Activated CD4-positive, alpha-beta T cell treated with anti-CD3 and anti-CD28 coated beads for 36 hours (primary cell): ENCODE measurements at regions of chr10 and their contacts with region 1.

Region 1: GRCh38 chr10:30591249-30591670 is 38.3 kb downstream of the LYZL2 start:
- DNase-seq: peak; percentile 57
- ATAC-seq: peak; percentile 66
- H3K4me3 Mint-ChIP-seq: no peak overlapping the region
- H3K27ac Mint-ChIP-seq: no peak overlapping the region
- H3K4me1 Mint-ChIP-seq: no peaks in the 10 kb centered on the region
- H3K27me3 Mint-ChIP-seq: peaks cover 11% of the 10 kb centered on the region

Region 2: DNA sequence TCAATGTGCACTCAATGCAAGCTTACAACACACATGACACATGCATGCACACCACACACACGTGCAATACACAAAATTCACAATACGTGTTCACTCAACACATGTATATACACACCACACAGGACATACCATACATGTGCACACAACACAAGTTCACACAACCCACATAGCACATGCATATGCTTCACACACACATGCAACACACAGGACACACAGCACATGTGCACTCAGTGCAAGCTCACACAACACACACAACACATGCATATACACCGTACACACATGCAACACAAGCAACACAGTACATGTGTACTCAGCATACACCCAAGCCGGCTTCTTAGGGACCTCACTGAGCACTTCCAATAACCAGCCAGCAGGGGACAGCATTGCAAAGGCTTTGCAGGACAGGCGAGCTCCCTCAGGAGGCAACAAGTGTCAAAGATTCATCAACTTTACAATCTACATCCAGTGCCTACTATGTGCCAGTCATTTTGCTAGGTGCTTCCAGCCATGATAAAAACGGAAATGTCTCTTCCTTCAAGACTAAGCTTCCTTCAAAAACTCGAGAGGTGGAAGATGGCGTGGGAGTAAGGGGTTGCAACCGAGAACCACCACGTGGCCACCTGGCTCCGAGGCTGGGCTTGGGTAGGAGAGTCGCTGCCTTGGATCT is 593.0 kb before region 1 on chr10:
- CTCF ChIA-PET with region 1: interaction called, 7 read pairs
- POLR2A ChIA-PET with region 1: no interaction called
- intact Hi-C with region 1: loop called in 1 of 2 experiments (anchors 2 kb)
- DNase-seq: peak; percentile 86
- ATAC-seq: peak; percentile 82
- H3K4me3 Mint-ChIP-seq: no peak overlapping the region
- H3K27ac Mint-ChIP-seq: no peak overlapping the region
- H3K4me1 Mint-ChIP-seq: peaks cover 9% of the 10 kb centered on the region
- H3K27me3 Mint-ChIP-seq: peaks cover 33% of the 10 kb centered on the region

Region 3: GRCh38 chr10:30392564-30392990 is 198.7 kb before region 1 on chr10:
- CTCF ChIA-PET with region 1: interaction called, 73 read pairs
- POLR2A ChIA-PET with region 1: no interaction called
- intact Hi-C with region 1: loop called (anchors 1 kb)
- DNase-seq: peak; percentile 87
- ATAC-seq: peak; percentile 100
- H3K4me3 Mint-ChIP-seq: no peak overlapping the region
- H3K27ac Mint-ChIP-seq: no peak overlapping the region
- H3K4me1 Mint-ChIP-seq: peaks cover 3% of the 10 kb centered on the region
- H3K27me3 Mint-ChIP-seq: peaks cover 19% of the 10 kb centered on the region

Region 4: DNA sequence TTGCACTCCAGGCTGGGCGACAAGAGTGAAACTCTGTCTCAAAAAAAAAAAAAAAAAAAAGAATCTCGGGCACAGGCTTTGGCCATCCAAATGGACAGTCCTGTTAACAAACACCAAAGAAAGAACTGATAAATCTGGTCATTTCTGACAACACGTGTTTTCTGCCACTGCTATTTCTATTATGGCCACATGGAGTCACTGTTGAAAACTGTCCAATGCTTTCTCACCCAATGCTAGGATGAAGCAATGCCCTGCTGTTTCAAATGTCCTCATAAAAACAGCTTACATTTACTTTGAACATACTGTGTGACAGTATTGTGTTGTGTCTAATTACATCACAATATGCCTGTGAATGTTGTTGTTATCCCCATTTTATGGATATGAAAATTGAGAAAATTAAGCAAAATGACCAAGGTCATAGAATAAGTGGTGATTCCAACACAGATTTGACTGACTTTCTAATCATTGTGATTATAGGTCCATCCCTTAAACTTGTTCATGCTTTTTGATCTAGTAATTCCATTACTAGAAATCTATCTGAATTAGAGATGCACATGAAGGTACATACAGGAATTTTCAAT is 177.2 kb before region 1 on chr10:
- CTCF ChIA-PET with region 1: interaction called, 10 read pairs
- POLR2A ChIA-PET with region 1: no interaction called
- intact Hi-C with region 1: loop called (anchors 1 kb)
- DNase-seq: no peak
- ATAC-seq: peak; percentile 39
- H3K4me3 Mint-ChIP-seq: no peak overlapping the region
- H3K27ac Mint-ChIP-seq: no peak overlapping the region
- H3K4me1 Mint-ChIP-seq: peaks cover 18% of the 10 kb centered on the region
- H3K27me3 Mint-ChIP-seq: no peaks in the 10 kb centered on the region

Region 5: GRCh38 chr10:30534465-30535144 is 56.7 kb before region 1 on chr10:
- CTCF ChIA-PET with region 1: interaction called, 11 read pairs
- POLR2A ChIA-PET with region 1: no interaction called
- intact Hi-C with region 1: loop called in 1 of 2 experiments (anchors 2 kb)
- DNase-seq: peak; percentile 82
- ATAC-seq: peak; percentile 49
- H3K4me3 Mint-ChIP-seq: no peak overlapping the region
- H3K27ac Mint-ChIP-seq: no peak overlapping the region
- H3K4me1 Mint-ChIP-seq: peaks cover 16% of the 10 kb centered on the region
- H3K27me3 Mint-ChIP-seq: no peaks in the 10 kb centered on the region

Region 6: DNA sequence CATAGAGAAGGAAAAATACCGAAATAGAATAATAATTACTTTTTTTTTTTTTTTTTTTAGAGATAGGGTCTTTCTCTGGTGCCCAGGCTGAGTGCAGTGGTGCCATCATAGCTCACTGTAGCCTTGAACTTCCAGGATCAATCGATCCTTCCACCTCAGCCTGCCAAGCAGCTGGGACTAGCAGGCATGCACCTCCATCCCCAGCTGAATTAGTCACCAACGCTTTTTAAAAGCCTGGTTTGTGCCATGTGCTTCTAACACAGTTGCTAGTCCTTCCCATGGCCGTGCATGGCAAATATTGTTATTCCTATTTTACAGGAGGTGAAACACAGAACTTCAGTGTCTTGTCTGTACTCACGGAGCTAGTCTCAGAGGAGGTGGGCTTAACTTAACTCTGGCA is 15.1 kb after region 1 on chr10:
- CTCF ChIA-PET with region 1: interaction called, 15 read pairs
- POLR2A ChIA-PET with region 1: no interaction called
- intact Hi-C with region 1: no loop called
- DNase-seq: no peak
- ATAC-seq: no peak
- H3K4me3 Mint-ChIP-seq: no peak overlapping the region
- H3K27ac Mint-ChIP-seq: no peak overlapping the region
- H3K4me1 Mint-ChIP-seq: no peaks in the 10 kb centered on the region
- H3K27me3 Mint-ChIP-seq: peaks cover 6% of the 10 kb centered on the region